GM10248 (cell line): ENCODE measurements at regions of chr11 and their contacts with region 1.

Region 1: DNA sequence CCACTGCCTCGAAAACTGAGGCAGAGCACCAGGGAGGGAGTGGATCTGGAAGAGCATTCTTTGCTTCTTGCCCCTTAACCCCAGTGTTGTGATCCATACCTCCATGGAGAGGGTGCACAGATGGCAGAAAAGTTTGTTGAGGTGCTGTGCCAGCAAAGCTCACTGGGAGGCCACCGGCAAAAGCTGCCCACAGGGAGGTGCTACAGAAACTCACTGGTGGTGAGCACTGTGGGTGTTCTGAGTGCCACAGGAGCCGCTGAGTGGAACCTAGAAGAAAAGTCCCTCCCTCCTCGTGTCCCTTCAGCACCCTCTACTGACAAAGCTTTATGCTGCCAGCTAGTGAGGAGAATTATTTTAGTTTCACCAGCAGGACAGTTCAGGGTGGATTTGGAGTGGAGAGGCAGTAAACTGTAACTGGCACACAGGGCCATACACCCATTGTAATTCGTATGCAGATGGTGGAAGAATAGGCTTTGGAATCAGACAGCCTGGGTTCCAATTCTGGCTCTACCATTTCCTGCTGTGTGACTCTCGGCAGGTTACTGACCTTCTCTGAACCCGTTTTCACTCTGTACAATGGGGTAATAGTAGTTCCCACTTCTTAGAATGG is 84.6 kb downstream of the SWAP70 start:
- DNase-seq: peak; percentile 77
- CTCF ChIP-seq: peak; percentile 91

Region 2: DNA sequence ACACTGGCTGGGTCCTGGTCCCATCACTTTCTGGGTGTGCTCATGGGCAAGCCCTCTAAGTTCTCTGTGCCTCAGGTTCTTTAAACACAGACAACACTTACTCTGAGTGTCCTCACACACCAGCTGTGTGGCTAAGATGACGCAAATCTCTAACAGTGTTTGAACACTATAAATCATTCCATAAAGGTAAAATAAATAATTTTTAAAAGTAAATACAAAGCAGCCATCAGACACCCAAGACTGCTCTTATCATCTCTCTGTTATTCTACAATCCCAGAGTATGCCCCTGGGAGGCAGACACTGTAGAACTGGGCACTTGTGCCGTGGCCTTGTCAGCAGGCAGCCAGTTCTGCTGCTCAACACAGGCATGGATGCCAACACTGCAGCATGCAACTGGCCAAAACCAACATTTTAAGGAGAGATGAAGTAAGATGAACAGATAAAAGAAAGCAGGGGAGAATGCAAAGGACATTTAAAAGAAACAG is 1009.1 kb before region 1 on chr11:
- CTCF ChIA-PET with region 1: no interaction called
- POLR2A ChIA-PET with region 1: no interaction called
- DNase-seq: no peak
- CTCF ChIP-seq: no peak

Region 3: GRCh38 chr11:9573052-9573774 is 175.3 kb before region 1 on chr11 and contains the start of gene WEE1:
- CTCF ChIA-PET with region 1: interaction called, 10 read pairs
- POLR2A ChIA-PET with region 1: interaction called, 3 read pairs
- DNase-seq: peak; percentile 98
- CTCF ChIP-seq: no peak

Region 4: GRCh38 chr11:9672288-9672916 is 76.1 kb before region 1 on chr11:
- CTCF ChIA-PET with region 1: interaction called, 14 read pairs
- POLR2A ChIA-PET with region 1: interaction called, 3 read pairs
- DNase-seq: no peak
- CTCF ChIP-seq: no peak

Region 5: DNA sequence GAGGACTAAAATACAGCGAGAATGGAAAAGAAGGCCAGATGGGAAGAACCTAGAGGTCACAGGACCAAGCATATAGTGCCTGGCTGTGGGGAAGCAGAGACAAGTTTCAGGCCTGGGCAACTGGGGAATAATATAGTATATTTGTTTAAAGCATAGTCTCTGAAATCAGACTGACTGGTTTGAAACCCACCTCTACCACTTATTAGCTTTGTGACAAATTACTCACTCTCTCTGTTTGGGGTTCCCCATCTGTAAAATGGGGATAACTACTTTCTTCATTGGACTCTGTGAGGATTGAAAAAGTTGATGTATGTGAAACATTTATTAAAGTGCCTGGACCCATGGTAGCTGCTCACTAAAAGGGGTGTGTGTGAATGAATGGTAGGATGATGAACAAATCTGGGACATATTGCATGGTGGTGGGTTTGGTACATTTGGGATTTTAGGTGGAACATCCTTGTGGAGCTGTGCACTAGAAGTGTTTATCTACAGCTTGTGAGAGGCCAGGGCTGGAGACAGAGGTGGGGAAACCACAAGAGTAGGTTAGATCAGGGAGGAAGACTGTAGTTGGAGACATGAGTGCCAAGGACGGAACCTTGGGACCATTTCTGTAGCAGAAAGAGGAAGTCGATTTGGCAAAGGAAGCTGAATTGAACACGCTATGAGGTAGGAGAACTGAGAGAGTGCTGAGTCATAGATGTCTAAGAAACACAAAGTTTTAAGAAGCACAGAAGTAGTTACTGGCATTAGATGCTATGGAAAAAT is 32.0 kb before region 1 on chr11:
- CTCF ChIA-PET with region 1: interaction called, 15 read pairs
- POLR2A ChIA-PET with region 1: no interaction called
- DNase-seq: peak; percentile 64
- CTCF ChIP-seq: no peak

Region 6: DNA sequence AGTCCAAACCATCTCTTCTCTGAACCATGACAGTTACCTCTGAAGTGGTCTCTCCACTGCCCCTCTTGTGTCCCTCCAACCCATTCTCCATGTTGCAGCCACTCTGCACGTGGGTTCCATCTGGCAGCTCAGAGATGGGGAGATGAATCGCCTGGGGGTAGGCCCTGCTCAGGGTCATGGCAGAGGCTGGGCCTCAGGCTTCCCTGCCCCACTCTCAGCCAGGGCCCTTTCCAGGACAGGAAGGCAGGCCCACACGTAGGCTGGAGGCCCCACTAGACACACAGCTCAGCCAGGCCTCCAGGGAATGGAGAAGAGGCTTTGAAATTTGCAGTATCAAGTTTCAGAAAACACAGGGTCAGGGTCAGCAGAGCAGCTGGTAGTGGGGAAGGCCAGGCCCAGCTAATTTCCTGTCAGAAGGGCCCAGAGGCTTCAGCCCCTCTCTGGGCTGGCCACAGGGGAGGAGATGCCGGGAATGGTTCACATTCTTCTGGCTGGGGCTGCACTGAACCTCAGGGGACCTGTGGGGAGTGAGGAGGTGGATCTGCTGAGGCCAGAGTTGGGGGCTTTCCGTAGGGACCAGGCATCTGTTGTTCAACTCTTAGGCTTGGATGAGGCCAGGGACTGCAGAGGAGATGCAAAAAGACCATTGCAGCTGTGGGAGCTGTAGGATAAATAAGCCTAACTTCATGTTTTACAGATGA is 17.0 kb after region 1 on chr11:
- CTCF ChIA-PET with region 1: interaction called, 19 read pairs
- POLR2A ChIA-PET with region 1: no interaction called
- DNase-seq: no peak
- CTCF ChIP-seq: no peak

Region 7: DNA sequence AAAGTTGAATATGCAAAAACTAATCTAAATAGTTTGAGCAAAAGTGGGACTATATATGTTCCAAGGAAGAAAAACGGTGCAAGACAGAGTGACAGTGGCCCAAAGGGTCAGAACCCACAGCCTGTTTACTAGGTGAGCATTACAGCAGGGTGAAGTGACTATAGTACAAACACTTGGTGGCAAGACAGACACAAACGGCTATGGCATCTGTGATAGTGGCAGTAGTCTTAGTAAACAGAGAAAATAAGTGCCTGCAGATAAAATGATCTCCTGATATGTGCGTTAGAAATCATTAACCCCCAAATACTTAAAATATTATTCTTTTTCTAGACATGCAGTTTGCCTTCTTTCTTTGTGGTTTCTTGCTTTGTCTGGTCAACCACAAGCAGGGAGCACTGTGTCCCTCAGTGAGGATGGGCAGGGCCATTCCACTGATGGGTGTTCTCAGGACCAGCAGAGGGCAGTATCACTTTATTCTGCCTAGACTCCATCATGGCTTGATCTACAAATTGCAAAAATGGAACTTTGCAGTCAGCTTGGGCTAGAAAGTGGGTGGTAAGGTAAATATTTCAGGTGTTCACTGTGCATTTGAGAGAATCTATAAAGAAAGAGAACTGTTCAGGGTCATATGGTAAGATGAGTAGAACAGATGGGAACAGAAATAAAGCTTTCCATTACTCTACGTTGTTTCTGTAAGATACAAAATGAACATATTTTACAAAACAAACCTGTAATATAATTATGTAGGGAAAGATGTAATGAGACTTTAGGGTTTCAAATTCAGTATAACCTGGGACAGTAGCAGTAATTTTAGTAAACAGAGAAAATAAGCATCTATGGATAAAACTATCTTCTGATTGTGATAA is 113.6 kb after region 1 on chr11:
- CTCF ChIA-PET with region 1: no interaction called
- POLR2A ChIA-PET with region 1: no interaction called
- DNase-seq: peak; percentile 65
- CTCF ChIP-seq: peak; percentile 86